ENCODE measurements at regions of chr7 and their contacts with region 1.

Region 1: DNA sequence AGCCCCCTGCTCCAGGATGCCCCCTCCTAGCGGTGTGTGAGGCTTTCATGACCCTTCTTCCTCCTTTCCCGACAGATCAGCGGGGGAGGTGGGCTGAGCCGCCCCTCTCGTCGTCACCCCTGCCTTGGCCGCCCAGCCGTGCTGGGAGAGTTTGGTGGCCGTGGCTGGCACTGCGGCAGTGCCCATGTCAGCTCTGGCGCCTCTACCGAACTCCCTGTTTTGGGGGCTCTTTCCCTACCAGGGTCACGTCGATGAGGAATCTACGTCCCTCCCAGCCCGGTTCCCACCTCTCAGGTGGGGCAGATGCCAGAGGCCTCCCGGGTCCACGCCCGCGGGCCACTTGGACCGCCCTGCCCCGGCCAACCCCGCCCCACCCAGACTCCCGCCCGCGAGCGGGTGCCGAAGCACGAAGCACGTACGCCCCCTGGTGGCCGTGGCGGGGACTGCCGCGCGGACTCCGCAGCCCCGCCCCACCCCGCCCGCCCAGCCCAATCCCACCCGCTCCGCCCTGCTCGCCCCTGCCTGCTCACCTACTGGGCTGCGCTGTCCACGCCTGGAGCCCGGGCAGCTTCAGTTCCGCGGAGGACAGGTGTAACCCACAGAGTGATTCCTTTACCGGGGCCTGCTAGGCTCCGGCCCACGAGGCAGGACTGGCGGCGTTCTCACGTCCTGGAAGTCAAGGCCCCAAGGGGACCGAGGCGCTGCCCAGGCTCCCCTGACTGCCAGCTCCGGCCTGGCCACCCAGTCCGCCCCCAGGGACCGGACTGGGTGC is 127.1 kb downstream of the UBE2H start:
- DNase-seq: peak; percentile 87

Region 2: DNA sequence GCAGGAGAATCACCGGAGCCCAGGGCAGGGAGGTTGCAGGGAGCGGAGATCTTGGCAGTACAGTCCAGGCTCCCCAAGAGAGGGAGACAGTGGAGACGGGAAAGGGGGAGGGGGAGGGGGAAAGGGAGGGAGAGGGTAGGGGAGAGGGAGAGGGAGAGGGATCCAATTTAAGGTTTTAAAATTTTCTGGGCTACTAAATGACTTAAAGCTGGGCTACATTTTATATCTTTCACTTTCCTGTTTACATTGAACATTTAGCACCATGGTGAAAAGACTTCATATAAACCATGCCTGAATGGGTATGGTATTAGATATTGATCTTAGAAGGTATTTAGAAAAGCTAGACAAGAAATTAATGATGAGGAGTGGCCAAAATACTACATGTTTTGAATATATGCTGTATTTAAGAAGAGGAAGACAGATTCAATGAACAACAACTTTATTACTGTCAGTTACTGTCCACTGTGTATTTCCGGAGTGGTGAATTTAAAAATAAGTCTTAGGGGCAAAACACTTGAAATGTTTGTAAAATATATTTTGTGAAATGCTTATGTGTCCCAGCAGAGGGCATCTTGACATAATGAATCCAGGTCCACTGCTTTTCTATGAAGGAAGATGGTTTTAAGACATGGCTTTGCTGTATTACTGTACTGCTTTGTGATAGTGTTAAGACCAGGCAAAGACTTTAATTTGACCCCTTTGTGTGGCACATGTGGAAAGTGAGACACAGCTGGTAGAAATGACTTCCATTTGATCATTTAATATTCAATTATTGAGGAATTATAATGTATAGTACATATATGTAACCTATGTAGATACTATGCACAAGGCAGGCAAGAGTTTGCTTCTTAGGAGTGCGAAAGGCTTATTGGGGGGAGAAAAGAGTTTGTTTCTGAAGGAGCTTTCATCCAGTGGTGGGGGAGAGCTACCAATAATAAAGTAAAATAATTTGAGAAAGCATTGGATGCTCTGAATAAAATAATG is 161.4 kb before region 1 on chr7:
- CTCF ChIA-PET with region 1: interaction called, 15 read pairs
- POLR2A ChIA-PET with region 1: no interaction called
- DNase-seq: peak; percentile 35

Region 3: GRCh38 chr7:129707910-129708499 is 117.7 kb before region 1 on chr7:
- CTCF ChIA-PET with region 1: no interaction called
- POLR2A ChIA-PET with region 1: no interaction called
- DNase-seq: no peak

Region 4: DNA sequence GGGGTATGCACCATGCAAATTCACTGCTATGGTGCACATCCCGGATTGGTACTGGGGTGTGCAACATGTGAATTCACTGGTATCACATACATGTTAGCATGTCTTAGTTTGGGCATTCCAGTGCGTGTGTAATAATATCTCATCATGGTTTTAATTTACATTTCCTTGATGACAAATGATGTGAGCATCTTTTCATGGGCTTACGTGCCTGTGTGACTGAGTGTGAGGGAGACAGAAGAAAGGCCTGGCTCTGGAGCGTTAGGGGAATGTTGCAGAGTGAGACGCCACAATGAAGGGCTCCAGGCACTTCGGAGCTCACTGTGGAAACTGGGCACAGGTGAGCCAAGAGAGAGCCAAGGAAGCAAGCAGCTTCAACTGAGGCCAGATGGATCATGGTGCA is 35.5 kb before region 1 on chr7:
- CTCF ChIA-PET with region 1: no interaction called
- POLR2A ChIA-PET with region 1: no interaction called
- DNase-seq: no peak

Region 5: DNA sequence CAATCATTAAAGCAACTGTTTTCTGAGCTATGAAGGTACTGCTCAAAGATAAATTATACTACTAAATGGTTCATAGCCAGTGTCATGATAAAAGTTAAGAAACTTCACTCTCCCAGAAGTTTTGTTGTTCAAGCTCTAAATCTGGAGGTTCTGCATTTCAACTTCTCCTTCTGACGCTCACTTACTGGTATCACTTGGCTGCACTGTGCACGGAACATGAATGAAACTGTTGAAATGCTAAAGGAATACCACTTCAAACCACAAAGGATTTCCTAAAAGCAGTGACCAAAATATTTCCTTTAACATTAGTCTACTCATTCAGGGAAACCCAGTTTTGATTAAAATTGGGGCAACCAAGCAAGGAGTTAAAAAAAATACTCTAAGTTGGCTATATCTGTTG is 33.5 kb after region 1 on chr7:
- CTCF ChIA-PET with region 1: no interaction called
- POLR2A ChIA-PET with region 1: no interaction called
- DNase-seq: no peak

Region 6: DNA sequence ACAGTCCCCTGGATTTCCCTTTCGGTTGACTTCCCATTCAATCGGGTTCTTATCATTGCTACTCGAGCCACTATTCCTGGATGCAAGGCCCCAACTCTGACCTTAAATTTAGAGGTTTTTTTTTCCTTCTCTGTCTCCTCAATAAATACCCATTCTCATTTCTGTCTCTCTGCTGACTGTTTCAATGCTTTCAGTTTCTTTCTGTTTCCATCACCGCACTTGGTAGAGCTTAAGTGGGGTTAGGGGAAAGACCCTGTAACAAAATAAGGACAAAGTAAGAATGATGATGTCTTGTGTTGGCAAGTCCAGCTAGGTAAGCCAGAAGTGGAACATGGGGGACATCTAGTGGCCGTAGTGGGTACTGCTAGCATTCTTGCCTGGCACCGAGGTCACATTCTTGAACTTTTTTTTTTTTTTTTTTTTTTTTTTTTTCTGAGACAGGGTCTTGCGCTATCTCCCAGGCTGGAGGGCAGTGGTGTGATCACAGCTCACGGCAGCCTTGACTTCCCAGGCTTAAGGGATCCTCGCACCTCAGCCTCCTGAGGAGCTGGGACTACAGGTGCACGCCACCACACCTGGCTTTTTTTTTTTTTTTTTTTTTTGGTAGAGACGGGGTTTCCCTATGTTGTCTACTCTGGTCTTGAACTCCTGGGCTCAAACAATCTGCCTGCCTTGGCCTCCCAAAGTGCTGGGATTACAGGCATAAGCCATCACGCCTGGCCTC is 185.2 kb after region 1 on chr7:
- CTCF ChIA-PET with region 1: interaction called, 10 read pairs
- POLR2A ChIA-PET with region 1: no interaction called
- DNase-seq: peak; percentile 82

Region 7: GRCh38 chr7:130154501-130155317 is 329.0 kb after region 1 on chr7:
- CTCF ChIA-PET with region 1: no interaction called
- POLR2A ChIA-PET with region 1: no interaction called
- DNase-seq: peak; percentile 36

Measured in HEK293T (cell line).